Activated CD4-positive, alpha-beta T cell treated with anti-CD3 and anti-CD28 coated beads for 36 hours (primary cell): ENCODE measurements at regions of chr22 and their contacts with region 1.

Region 1: GRCh38 chr22:37139762-37140161 is 10.0 kb downstream of the IL2RB start:
- DNase-seq: no peak
- ATAC-seq: no peak
- H3K4me3 Mint-ChIP-seq: no peak overlapping the region
- H3K27ac Mint-ChIP-seq: peak overlapping the region; percentile 93
- H3K4me1 Mint-ChIP-seq: peaks cover 56% of the 10 kb centered on the region
- H3K27me3 Mint-ChIP-seq: no peaks in the 10 kb centered on the region

Region 2: DNA sequence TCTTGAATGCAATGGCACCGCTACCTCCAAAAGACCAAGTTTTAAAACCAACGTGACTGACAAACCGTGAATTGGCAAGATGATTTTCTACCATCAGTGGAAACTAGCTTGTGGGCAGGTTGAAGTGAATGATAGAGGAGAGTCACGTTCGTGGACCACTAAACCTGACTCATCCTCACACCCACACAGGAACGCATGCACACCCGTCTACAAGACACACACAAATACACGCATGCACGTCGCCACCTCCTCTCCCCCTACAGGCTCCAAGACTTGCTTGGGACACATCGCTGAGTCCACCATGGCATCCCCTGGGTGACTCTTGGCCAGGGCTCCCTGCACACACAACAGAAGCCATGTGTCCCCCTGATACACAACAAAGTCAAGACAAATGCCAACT is 44.6 kb before region 1 on chr22:
- CTCF ChIA-PET with region 1: no interaction called
- POLR2A ChIA-PET with region 1: no interaction called
- intact Hi-C with region 1: loop called in 1 of 2 experiments (anchors 1 kb)
- DNase-seq: peak; percentile 87
- ATAC-seq: peak; percentile 87
- H3K4me3 Mint-ChIP-seq: no peak overlapping the region
- H3K27ac Mint-ChIP-seq: peak overlapping the region; percentile 79
- H3K4me1 Mint-ChIP-seq: peaks cover 31% of the 10 kb centered on the region
- H3K27me3 Mint-ChIP-seq: peaks cover 11% of the 10 kb centered on the region

Region 3: GRCh38 chr22:37112084-37112728 is 27.6 kb before region 1 on chr22:
- CTCF ChIA-PET with region 1: no interaction called
- POLR2A ChIA-PET with region 1: no interaction called
- intact Hi-C with region 1: no loop called
- DNase-seq: no peak
- ATAC-seq: no peak
- H3K4me3 Mint-ChIP-seq: no peak overlapping the region
- H3K27ac Mint-ChIP-seq: no peak overlapping the region
- H3K4me1 Mint-ChIP-seq: peaks cover 11% of the 10 kb centered on the region
- H3K27me3 Mint-ChIP-seq: no peaks in the 10 kb centered on the region